ENCODE measurements at regions of chr10 and their contacts with region 1.

Region 1: DNA sequence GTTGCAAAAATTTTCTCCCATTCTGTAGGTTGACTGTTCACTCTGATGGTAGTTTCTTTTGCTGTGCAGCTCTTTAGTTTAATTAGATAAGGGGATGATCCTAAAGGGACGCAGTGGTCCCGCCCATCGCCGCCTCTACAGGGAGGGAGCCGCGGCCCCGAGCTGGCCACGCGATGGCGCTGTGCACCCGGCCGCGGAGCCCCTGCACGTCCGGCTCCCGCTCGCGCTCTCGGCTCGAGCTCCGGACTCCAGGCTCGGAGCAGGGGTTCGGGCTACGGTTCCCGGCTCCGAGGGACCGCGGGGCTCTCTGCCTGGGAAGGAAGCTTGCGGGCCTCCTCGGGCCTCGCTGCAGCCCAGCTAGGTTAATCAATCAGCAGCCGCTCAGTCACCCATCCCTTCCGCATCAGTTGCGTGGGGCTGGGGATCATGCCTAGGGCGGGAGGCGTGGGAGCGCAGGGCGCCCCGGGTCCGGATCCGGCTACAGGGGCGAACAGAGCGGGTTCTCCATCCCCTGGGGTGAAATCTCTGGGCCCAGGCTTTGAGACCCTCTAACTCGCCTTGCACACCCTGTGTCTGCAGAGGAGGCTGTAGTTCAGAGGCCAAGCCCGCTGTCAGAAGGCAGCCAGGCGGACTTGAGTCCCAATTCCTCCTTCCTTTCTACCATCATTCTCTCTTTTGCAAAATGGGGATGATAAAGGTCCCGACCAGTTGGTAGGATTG is 97.9 kb downstream of the WDR11 start:
- DNase-seq: peak; percentile 81
- ATAC-seq: peak; percentile 88
- H3K4me3 Mint-ChIP-seq: peak overlapping the region; percentile 70
- H3K27ac Mint-ChIP-seq: no peak overlapping the region
- H3K4me1 Mint-ChIP-seq: peaks cover 22% of the 10 kb centered on the region
- H3K27me3 Mint-ChIP-seq: peaks cover 28% of the 10 kb centered on the region
- CTCF ChIP-seq: peak; percentile 74

Region 2: GRCh38 chr10:120770496-120770895 is 178.6 kb before region 1 on chr10:
- CTCF ChIA-PET with region 1: no interaction called
- POLR2A ChIA-PET with region 1: no interaction called
- DNase-seq: no peak
- ATAC-seq: no peak
- H3K4me3 Mint-ChIP-seq: no peak overlapping the region
- H3K27ac Mint-ChIP-seq: no peak overlapping the region
- H3K4me1 Mint-ChIP-seq: peaks cover 12% of the 10 kb centered on the region
- H3K27me3 Mint-ChIP-seq: no peaks in the 10 kb centered on the region; the same call in 1 of the 2 replicates
- CTCF ChIP-seq: no peak

Region 3: DNA sequence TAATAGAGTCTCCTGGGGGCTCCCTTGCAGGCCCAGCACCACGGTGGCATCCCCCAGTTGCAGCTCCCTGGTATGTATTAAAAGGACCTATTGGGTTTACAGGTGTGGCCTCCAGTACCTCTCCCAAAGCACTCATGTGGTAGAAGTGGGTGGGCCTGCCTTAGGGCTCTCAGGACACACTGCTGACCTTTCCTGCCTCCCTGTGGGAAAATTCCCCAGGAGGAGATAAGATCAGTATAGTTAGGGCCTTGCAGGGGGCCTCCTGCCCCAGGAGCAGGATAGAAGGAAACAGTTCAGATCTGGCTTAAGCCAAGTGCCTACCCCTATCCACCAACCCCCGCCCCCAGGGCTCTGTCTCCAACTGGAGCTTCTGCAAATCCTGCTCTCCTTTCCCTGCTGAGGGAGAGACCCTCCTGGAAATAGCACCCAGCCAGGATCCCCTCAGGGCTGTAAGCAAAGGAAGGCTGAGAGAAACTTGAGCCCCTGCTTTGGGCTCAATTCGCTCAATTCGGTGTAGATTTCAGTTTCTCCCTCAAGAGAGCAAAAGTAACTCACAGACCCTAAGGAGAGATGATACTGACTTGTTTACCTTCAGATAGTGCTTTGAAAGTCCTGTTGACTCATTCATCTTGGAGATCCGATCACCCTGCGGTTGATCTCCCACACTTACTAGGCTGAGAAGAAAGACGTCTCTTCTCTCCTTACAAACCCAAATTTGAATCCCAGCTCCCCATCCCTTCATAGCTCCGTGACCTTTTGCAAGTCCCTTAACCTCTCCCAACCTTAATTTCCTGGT is 32.8 kb after region 1 on chr10:
- CTCF ChIA-PET with region 1: interaction called, 15 read pairs
- POLR2A ChIA-PET with region 1: no interaction called
- DNase-seq: no peak
- ATAC-seq: peak; percentile 11; the same call in 1 of the 2 replicates
- H3K4me3 Mint-ChIP-seq: peak overlapping the region; percentile 46; the same call in 1 of the 2 replicates
- H3K27ac Mint-ChIP-seq: no peak overlapping the region
- H3K4me1 Mint-ChIP-seq: peaks cover 43% of the 10 kb centered on the region
- H3K27me3 Mint-ChIP-seq: peaks cover 48% of the 10 kb centered on the region
- CTCF ChIP-seq: no peak

Region 4: GRCh38 chr10:121069061-121069850 is 120.2 kb after region 1 on chr10:
- CTCF ChIA-PET with region 1: interaction called, 21 read pairs
- POLR2A ChIA-PET with region 1: no interaction called
- DNase-seq: no peak
- ATAC-seq: no peak
- H3K4me3 Mint-ChIP-seq: no peak overlapping the region
- H3K27ac Mint-ChIP-seq: no peak overlapping the region
- H3K4me1 Mint-ChIP-seq: 0 out of 2 replicates have a peak, but pooled peaks cover 3% of the 10 kb centered on the region
- H3K27me3 Mint-ChIP-seq: no peaks in the 10 kb centered on the region
- CTCF ChIP-seq: no peak

Region 5: DNA sequence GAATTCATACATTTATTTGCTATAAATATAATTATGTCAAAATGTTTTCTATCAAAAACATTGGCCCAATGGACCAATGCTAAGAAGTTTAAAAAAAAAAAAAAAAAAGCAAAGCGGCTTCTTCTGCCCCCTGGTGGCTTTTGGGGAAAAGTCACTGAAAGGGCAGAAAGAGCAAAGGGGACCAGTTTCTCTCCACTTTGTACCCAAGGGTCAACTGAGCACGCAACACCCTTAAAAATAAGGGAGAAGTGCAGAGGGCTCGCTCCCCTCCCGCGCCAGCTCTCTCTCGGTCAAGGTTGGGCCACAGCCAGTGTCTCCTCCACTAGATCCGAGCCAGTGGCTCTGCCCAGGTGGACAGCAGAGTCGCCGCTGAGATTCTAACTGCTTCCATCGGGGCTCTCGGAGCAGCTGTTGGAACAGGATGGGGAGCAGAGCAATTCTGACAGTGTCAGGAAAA is 785.6 kb after region 1 on chr10:
- CTCF ChIA-PET with region 1: interaction called, 24 read pairs
- POLR2A ChIA-PET with region 1: no interaction called
- DNase-seq: peak; percentile 25
- ATAC-seq: peak; percentile 62
- H3K4me3 Mint-ChIP-seq: no peak overlapping the region
- H3K27ac Mint-ChIP-seq: no peak overlapping the region
- H3K4me1 Mint-ChIP-seq: peaks cover 35% of the 10 kb centered on the region
- H3K27me3 Mint-ChIP-seq: peaks cover 9% of the 10 kb centered on the region
- CTCF ChIP-seq: peak; percentile 41